ENCODE measurements at regions of chr1 and their contacts with region 1.

Region 1: DNA sequence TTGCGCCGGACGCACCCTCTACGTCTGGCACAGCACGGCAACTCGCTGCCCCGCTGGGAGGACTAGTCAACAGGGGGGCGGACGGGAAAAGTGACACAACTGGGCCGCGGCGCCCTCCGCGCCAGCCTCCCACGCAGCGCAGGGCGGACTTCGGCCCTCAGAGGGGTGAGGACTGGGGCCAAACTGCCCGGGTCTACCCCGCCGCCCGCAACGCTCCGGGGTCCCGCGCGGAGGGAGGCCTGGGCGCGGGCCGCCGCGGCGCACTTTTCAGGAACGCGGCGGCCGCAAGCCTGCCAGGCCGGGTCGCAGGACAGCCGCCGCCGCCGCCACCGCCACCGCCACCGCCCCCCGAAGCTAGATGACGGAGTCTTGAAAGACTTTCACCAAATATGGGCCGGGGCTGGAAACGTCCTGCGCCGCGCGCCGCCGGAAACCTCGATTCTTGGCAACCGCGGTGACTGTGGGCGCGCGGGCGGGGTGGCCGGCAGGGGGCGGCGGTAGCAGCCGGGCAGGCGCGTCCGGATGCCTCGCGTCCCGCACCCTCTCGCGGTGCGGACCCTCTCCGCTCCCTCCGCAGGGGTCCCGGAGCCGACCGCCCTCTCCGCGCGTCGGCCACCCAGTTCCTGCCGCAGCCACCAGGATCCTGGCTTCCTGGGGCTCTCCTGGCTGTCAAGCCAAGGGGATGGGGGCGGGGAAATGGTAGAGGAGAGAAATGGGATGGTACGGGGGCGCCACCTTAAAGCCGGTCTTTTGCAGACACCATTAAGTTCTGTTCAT is 3.7 kb upstream of the CCN1 start:
- DNase-seq: peak; percentile 90
- H3K4me3 Mint-ChIP-seq: peak overlapping the region; percentile 79
- H3K27ac Mint-ChIP-seq: no peak overlapping the region
- H3K4me1 Mint-ChIP-seq: peaks cover 29% of the 10 kb centered on the region
- H3K27me3 Mint-ChIP-seq: peaks cover 70% of the 10 kb centered on the region

Region 2: DNA sequence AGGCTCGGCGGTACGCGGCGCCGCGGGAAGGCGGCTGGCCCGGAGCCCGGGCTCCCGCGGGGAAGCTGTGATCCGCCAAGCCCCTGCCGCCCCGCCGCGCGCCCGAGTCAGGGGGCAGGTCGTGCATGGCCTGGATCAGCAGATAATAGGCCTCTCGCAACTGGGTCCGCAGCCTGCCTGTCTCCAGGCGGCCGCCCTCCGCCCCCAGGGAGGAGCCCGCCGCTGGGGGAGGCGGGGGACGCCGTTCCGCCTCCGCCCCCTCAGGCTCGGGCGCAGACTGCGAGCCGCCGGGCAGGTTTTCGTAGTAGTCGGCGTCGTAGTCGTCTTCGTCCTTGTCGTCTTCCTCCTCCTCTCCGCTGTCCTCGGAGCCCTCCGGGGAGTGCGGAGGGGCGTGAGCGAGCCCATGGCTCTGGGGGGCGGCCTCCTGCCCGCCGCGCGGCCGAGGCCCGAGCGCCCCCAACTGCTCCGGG is 375.9 kb before region 1 on chr1 and contains the start of gene SYDE2:
- intact Hi-C with region 1: loop called (anchors 5 kb)
- DNase-seq: peak; percentile 94
- H3K4me3 Mint-ChIP-seq: peak within 1 kb of the TSS; percentile 94
- H3K27ac Mint-ChIP-seq: peak within 1 kb of the TSS; percentile 87
- H3K4me1 Mint-ChIP-seq: peaks cover 12% of the 10 kb centered on the region
- H3K27me3 Mint-ChIP-seq: peaks cover 39% of the 10 kb centered on the region
- total RNA-seq, gene SYDE2: 1.2 and 1.4 TPM in 2 replicates

Region 3: GRCh38 chr1:85297855-85298629 is 278.8 kb before region 1 on chr1:
- intact Hi-C with region 1: loop called (anchors 2 kb)
- DNase-seq: peak; percentile 82
- H3K4me3 Mint-ChIP-seq: peak overlapping the region; percentile 56
- H3K27ac Mint-ChIP-seq: peak overlapping the region; percentile 86
- H3K4me1 Mint-ChIP-seq: peaks cover 25% of the 10 kb centered on the region
- H3K27me3 Mint-ChIP-seq: peaks cover 49% of the 10 kb centered on the region

Region 4: GRCh38 chr1:85307987-85308832 is 268.6 kb before region 1 on chr1:
- intact Hi-C with region 1: loop called (anchors 1 kb)
- DNase-seq: peak; percentile 85
- H3K4me3 Mint-ChIP-seq: no peak overlapping the region
- H3K27ac Mint-ChIP-seq: no peak overlapping the region
- H3K4me1 Mint-ChIP-seq: peaks cover 2% of the 10 kb centered on the region
- H3K27me3 Mint-ChIP-seq: peaks cover 68% of the 10 kb centered on the region

Region 5: GRCh38 chr1:85464497-85465098 is 112.2 kb before region 1 on chr1:
- intact Hi-C with region 1: loop called (anchors 5 kb)
- DNase-seq: peak; percentile 62
- H3K4me3 Mint-ChIP-seq: peak overlapping the region; percentile 62
- H3K27ac Mint-ChIP-seq: no peak overlapping the region
- H3K4me1 Mint-ChIP-seq: peaks cover 6% of the 10 kb centered on the region
- H3K27me3 Mint-ChIP-seq: peaks cover 64% of the 10 kb centered on the region

Region 6: GRCh38 chr1:85550784-85551516 is 25.9 kb before region 1 on chr1:
- intact Hi-C with region 1: no loop called
- DNase-seq: no peak
- H3K4me3 Mint-ChIP-seq: no peak overlapping the region
- H3K27ac Mint-ChIP-seq: no peak overlapping the region
- H3K4me1 Mint-ChIP-seq: no peaks in the 10 kb centered on the region
- H3K27me3 Mint-ChIP-seq: peaks cover 6% of the 10 kb centered on the region

Region 7: GRCh38 chr1:85607126-85607912 is 30.5 kb after region 1 on chr1:
- intact Hi-C with region 1: no loop called
- DNase-seq: no peak
- H3K4me3 Mint-ChIP-seq: no peak overlapping the region
- H3K27ac Mint-ChIP-seq: no peak overlapping the region
- H3K4me1 Mint-ChIP-seq: no peaks in the 10 kb centered on the region
- H3K27me3 Mint-ChIP-seq: no peaks in the 10 kb centered on the region

Region 8: DNA sequence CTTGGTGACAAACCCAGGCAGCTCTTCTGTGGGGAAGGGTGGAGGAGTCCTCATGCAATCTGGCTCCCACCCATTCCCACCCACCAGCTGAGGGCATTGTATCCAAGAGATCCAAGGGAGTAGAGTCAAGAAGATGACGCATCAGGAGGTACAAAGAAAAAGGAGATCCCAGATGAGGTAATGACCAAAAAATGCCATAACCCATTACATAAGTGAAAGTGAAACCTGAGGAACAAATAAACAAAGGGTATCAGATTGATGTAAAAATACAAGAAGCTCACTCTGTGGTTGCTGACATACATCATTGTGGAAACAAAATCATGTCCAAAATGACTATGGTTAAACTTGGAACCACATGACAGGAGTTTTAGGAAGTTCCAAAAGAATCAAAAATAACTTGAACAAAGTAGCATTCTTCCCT is 46.2 kb after region 1 on chr1:
- intact Hi-C with region 1: loop called (anchors 5 kb)
- DNase-seq: no peak
- H3K4me3 Mint-ChIP-seq: no peak overlapping the region
- H3K27ac Mint-ChIP-seq: no peak overlapping the region
- H3K4me1 Mint-ChIP-seq: peaks cover 9% of the 10 kb centered on the region
- H3K27me3 Mint-ChIP-seq: no peaks in the 10 kb centered on the region

Region 9: GRCh38 chr1:85707990-85708828 is 131.4 kb after region 1 on chr1 and contains the start of gene ZNHIT6:
- intact Hi-C with region 1: loop called (anchors 5 kb)
- DNase-seq: peak; percentile 95
- H3K4me3 Mint-ChIP-seq: no peak within 1 kb of the TSS
- H3K27ac Mint-ChIP-seq: no peak within 1 kb of the TSS
- H3K4me1 Mint-ChIP-seq: peaks cover 16% of the 10 kb centered on the region
- H3K27me3 Mint-ChIP-seq: no peaks in the 10 kb centered on the region
- total RNA-seq, gene ZNHIT6: 24.7 and 26.0 TPM in 2 replicates

Region 10: GRCh38 chr1:85806236-85806965 is 229.6 kb after region 1 on chr1:
- intact Hi-C with region 1: no loop called
- DNase-seq: no peak
- H3K4me3 Mint-ChIP-seq: no peak overlapping the region
- H3K27ac Mint-ChIP-seq: no peak overlapping the region
- H3K4me1 Mint-ChIP-seq: no peaks in the 10 kb centered on the region
- H3K27me3 Mint-ChIP-seq: no peaks in the 10 kb centered on the region

Measured in activated CD4-positive, alpha-beta T cell treated with anti-CD3 and anti-CD28 coated beads, Interleukin-2, amount 10 ng/mL, durations not matched to agents 24 days and 14 days (primary cell).